PC-3 (cell line): ENCODE measurements at regions of chrX and their contacts with region 1.

Region 1: GRCh38 chrX:107205770-107206696 is at the starts of genes DNAAF6 and NUP62CL:
- DNase-seq: peak; percentile 70
- ATAC-seq: peak; percentile 91
- H3K4me3 ChIP-seq: peak within 1 kb of the TSS; percentile 89
- H3K27ac ChIP-seq: no peak within 1 kb of the TSS
- H3K4me1 ChIP-seq: peaks cover 6% of the 10 kb centered on the region; the same call in 1 of the 2 replicates
- H3K27me3 ChIP-seq: no peaks in the 10 kb centered on the region
- CTCF ChIP-seq: no peak
- total RNA-seq, gene DNAAF6: not detected in 2 replicates
- total RNA-seq, gene NUP62CL: 4.8 and 9.9 TPM in 2 replicates

Region 2: GRCh38 chrX:107118322-107119147 is 87.5 kb before region 1 on chrX and contains the start of gene RBM41:
- CTCF ChIA-PET with region 1: no interaction called
- POLR2A ChIA-PET with region 1: no interaction called
- intact Hi-C with region 1: loop called (anchors 10 kb)
- DNase-seq: peak; percentile 84
- ATAC-seq: peak; percentile 99
- H3K4me3 ChIP-seq: peak within 1 kb of the TSS; percentile 92
- H3K27ac ChIP-seq: no peak within 1 kb of the TSS; the same call in 1 of the 2 replicates
- H3K4me1 ChIP-seq: peaks cover 13% of the 10 kb centered on the region
- H3K27me3 ChIP-seq: no peaks in the 10 kb centered on the region
- CTCF ChIP-seq: no peak
- total RNA-seq, gene RBM41: 12.8 and 14.2 TPM in 2 replicates

Region 3: GRCh38 chrX:107171369-107172102 is 34.5 kb before region 1 on chrX:
- CTCF ChIA-PET with region 1: no interaction called
- POLR2A ChIA-PET with region 1: no interaction called
- intact Hi-C with region 1: loop called (anchors 1 kb)
- DNase-seq: no peak
- ATAC-seq: no peak
- H3K4me3 ChIP-seq: no peak overlapping the region
- H3K27ac ChIP-seq: no peak overlapping the region
- H3K4me1 ChIP-seq: no peaks in the 10 kb centered on the region
- H3K27me3 ChIP-seq: no peaks in the 10 kb centered on the region
- CTCF ChIP-seq: no peak